ENCODE measurements at regions of chr13 and their contacts with region 1.

Region 1: DNA sequence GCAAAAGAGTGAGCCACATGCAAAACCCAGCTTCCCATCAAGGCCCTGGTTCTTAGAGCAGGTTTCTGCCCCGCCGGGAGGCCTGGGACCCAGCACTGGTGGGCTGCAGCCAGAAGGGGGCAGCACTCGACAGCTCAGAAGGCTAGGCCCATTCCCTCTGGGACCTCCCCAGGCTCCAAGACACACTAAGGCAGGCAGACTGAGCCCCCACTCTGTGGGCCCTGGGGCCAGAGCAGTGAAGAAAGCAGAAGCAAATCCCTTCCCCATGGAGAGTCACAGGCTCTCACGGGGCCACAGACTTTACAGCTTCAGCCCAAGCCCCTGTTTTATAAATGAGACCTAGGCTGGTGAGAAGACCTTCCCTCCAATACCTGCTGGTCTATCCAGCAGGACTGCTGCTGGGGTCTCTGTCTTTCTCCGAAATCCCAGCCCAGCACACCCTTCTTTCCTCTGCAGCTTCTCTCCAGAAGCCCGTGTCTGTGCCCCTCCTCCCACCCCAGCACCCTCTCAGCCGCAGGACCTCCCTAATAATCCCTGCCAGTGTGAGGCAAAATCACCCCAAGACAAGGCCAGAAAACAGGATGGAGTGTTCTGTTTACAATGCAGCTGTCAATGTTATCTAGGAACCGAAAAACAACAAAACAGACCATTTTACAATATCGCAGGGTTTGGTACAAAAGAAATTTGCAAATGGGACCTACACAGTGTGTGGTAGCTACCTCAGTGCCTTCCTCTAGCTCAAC is 109.3 kb downstream of the ABCC4 start:
- DNase-seq: peak; percentile 72 to 86 (median 81)
- H3K4me3 ChIP-seq: no peak overlapping the region
- H3K27ac ChIP-seq: no peak overlapping the region
- H3K4me1 ChIP-seq: peaks cover 0 to 2% (median 0%) of the 10 kb centered on the region in 4 experiments
- H3K27me3 ChIP-seq: no peaks in the 10 kb centered on the region

Region 2: GRCh38 chr13:95083758-95084157 is 108.2 kb before region 1 on chr13:
- CTCF ChIA-PET with region 1: no interaction called
- POLR2A ChIA-PET with region 1: no interaction called
- DNase-seq: peak in 2 of 3 donors; percentile 46 to 58
- H3K4me3 ChIP-seq: no peak overlapping the region
- H3K27ac ChIP-seq: no peak overlapping the region
- H3K4me1 ChIP-seq: peaks cover 26 to 49% (median 26%) of the 10 kb centered on the region in 4 experiments
- H3K27me3 ChIP-seq: no peaks in the 10 kb centered on the region

Region 3: GRCh38 chr13:95207769-95208366 is 15.9 kb after region 1 on chr13:
- CTCF ChIA-PET with region 1: interaction called, 19 read pairs
- POLR2A ChIA-PET with region 1: no interaction called
- DNase-seq: peak in 1 of 3 donors; percentile 27
- H3K4me3 ChIP-seq: no peak overlapping the region
- H3K27ac ChIP-seq: no peak overlapping the region
- H3K4me1 ChIP-seq: peaks cover 2 to 7% (median 5%) of the 10 kb centered on the region in 4 experiments
- H3K27me3 ChIP-seq: no peaks in the 10 kb centered on the region

Region 4: DNA sequence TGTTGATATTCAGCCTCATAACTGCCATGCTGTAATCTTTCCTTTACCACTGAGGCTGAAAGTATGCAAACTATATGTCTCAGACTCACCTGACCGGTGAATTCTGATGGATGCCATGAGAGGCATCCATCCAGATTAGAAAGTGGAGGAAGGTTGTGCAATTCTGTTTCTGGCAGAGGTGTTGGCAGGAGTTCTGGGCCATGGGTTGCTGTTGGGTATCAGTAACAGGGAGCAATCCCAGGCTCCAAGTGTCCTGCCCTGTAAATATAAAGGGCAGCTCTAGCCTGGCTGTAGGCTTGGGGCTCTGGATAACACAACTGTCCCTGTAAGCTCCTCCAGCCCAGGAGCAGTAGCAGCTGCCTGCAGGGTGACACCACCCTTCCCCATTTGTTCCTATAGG is 186.6 kb after region 1 on chr13:
- CTCF ChIA-PET with region 1: interaction called, 174 read pairs
- POLR2A ChIA-PET with region 1: interaction called, 3 read pairs
- DNase-seq: no peak
- H3K4me3 ChIP-seq: no peak overlapping the region
- H3K27ac ChIP-seq: no peak overlapping the region
- H3K4me1 ChIP-seq: peaks cover 0 to 3% (median 1%) of the 10 kb centered on the region in 4 experiments
- H3K27me3 ChIP-seq: no peaks in the 10 kb centered on the region

Region 5: GRCh38 chr13:95403828-95404522 is 212.0 kb after region 1 on chr13:
- CTCF ChIA-PET with region 1: interaction called, 213 read pairs
- POLR2A ChIA-PET with region 1: interaction called, 5 read pairs
- DNase-seq: peak; percentile 72 to 84 (median 80)
- H3K4me3 ChIP-seq: peak overlapping the region in 6 of 7 experiments; percentile 53 to 77 (median 59)
- H3K27ac ChIP-seq: no peak overlapping the region
- H3K4me1 ChIP-seq: peaks cover 0 to 10% (median 8%) of the 10 kb centered on the region in 4 experiments
- H3K27me3 ChIP-seq: peaks cover 0 to 3% (median 0%) of the 10 kb centered on the region in 5 experiments

Region 6: GRCh38 chr13:95834134-95834765 is 642.3 kb after region 1 on chr13:
- CTCF ChIA-PET with region 1: interaction called, 29 read pairs
- POLR2A ChIA-PET with region 1: no interaction called
- DNase-seq: peak; percentile 71 to 87 (median 80)
- H3K4me3 ChIP-seq: no peak overlapping the region
- H3K27ac ChIP-seq: no peak overlapping the region
- H3K4me1 ChIP-seq: peaks cover 0 to 3% (median 0%) of the 10 kb centered on the region in 4 experiments
- H3K27me3 ChIP-seq: no peaks in the 10 kb centered on the region